Heart right ventricle (tissue), 16 donors: ENCODE measurements at regions of chr11 and their contacts with region 1.

Region 1: DNA sequence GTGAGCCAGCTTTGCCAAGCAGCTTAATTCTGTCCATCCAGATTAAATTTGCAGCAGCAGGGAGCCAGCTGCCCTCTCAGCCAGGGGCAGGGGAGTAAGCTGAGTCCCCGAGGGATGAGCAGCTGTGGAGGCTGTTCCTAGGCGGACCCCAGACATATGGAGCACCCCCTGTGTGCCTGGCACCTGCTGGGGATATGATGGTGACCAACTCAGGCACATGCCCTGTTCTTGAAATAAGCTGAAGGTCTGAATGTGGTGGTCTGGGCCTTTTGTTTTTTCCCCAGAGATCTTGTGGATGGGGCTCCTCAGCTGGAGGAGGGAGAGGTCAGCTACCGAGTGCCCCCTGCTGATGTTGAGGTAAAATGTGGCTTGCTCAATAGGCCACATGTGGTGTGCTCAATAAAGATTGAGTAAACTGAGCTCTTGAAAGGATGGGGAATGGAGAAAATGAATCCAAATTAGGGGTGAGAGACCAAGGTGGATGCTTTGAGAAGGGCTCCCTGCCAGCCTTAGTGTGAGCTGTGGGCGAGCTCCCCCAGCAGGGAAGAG is 103.3 kb upstream of the NNMT start:
- DNase-seq: no peak
- ATAC-seq: no peak
- H3K4me3 ChIP-seq: no peak overlapping the region
- H3K27ac ChIP-seq: peak overlapping the region in 6 of 10 donors; percentile 14 to 96 (median 88)
- H3K4me1 ChIP-seq: peaks cover 25 to 60% (median 56%) of the 10 kb centered on the region in 9 donors
- H3K27me3 ChIP-seq: no peaks in the 10 kb centered on the region
- CTCF ChIP-seq: peak in 1 of 9 donors; percentile 15

Region 2: GRCh38 chr11:114243461-114244372 is 50.8 kb after region 1 on chr11:
- intact Hi-C with region 1: loop called in 1 of 10 experiments (anchors 5 kb)
- DNase-seq: peak in 1 of 2 donors; percentile 80
- ATAC-seq: peak; percentile 68 to 94 (median 73)
- H3K4me3 ChIP-seq: no peak overlapping the region
- H3K27ac ChIP-seq: peak overlapping the region in 9 of 10 donors; percentile 2 to 79 (median 55)
- H3K4me1 ChIP-seq: peaks cover 11 to 62% (median 37%) of the 10 kb centered on the region in 9 donors
- H3K27me3 ChIP-seq: no peaks in the 10 kb centered on the region
- CTCF ChIP-seq: no peak

Region 3: DNA sequence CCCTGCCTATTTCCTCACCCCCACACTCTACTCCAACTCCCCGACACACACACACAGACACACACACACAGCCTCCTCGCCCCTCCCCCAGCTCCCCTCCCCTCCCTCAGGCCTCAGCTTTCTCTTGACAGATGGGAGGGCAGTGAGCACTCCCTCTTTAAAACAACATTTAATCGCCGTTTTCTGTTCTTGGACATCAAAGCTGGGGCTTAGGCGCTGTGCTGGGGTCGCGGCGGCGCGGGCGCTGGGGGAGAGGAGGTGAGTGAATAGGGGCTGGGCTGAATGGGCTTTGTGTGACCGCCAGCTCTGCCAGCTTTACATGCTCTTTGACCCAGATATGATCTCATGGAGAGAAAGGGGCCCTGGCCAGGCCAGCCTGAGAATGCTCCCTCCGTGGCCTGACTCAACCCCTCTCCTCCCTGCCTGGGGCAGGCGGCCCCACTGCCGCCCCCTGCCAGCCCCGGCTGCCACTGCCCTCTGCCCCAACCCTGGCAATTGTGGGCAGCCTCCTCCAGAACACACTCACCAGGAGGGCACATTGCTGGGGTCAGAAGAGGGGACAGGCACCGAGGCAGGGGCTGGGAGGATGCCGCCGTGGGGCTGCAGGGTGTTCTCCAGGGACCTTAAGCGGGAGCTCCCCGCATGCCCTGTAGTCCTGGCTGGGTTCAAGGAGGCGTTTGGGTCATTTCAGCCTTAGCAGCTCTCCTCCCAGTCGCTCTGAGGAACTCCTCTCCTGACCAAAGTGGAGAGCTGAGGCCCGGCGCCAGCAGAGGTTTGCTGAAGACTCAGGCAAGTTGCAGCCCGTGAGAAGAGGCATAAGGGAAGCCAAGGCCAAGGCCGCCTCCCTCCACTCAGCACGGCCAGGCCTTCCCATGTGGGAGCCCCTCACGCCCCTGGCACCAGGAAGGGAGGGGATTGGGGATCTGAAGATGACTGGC is 65.0 kb after region 1 on chr11:
- intact Hi-C with region 1: loop called in 3 of 10 experiments (anchors 5 to 10 kb)
- DNase-seq: peak; percentile 53 to 68
- ATAC-seq: peak; percentile 49 to 76 (median 62)
- H3K4me3 ChIP-seq: peak overlapping the region in 7 of 10 donors; percentile 6 to 36 (median 25)
- H3K27ac ChIP-seq: peak overlapping the region; percentile 28 to 87 (median 73)
- H3K4me1 ChIP-seq: peaks cover 20 to 60% (median 56%) of the 10 kb centered on the region in 9 donors
- H3K27me3 ChIP-seq: no peaks in the 10 kb centered on the region
- CTCF ChIP-seq: peak in 7 of 9 donors; percentile 13 to 57 (median 45)